Dendritic cell treated with granulocyte-macrophage colony-stimulating factor and Interleukin-4, amounts not matched to agents 40 ng/mL and 50 ng/mL, for 4 days (primary cell): ENCODE measurements at regions of chr3 and their contacts with region 1.

Region 1: GRCh38 chr3:30042274-30042859 is 564.0 kb upstream of the TGFBR2 start:
- H3K4me3 Mint-ChIP-seq: no peak overlapping the region
- H3K27ac Mint-ChIP-seq: no peak overlapping the region
- H3K4me1 Mint-ChIP-seq: peaks cover 31% of the 10 kb centered on the region
- H3K27me3 Mint-ChIP-seq: no peaks in the 10 kb centered on the region

Region 2: DNA sequence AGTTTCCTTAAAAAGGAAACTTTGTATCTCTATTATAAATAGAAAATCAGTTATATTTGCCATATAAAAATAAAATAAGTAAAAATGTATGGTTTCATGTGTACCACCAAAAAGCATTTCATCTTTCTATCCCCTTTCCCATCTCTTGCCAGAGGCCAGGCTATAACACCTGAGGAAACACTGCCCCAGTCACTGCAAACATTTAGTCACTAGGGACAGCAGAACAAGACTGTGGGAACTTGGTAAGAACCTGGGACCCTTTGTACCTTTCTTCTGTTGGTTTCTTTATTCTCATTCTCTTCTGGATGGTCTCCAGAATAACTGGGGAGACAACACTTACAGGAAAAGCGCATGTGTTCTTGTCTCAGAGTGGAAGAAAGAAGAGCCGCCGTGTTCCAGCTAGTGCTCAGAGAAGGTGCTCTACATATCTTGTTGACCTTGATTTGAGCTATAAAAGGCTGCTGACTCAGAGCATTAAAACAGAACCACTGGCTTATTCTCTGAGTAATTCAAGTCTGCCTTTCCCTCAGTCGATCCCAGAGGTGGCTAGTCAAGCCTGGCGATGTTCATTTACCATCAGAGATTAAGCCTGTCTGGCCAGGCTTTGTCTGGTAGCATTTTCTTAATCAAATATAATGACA is 399.9 kb before region 1 on chr3:
- intact Hi-C with region 1: no loop called
- H3K4me3 Mint-ChIP-seq: no peak overlapping the region
- H3K27ac Mint-ChIP-seq: no peak overlapping the region
- H3K4me1 Mint-ChIP-seq: no peaks in the 10 kb centered on the region
- H3K27me3 Mint-ChIP-seq: peaks cover 14% of the 10 kb centered on the region

Region 3: DNA sequence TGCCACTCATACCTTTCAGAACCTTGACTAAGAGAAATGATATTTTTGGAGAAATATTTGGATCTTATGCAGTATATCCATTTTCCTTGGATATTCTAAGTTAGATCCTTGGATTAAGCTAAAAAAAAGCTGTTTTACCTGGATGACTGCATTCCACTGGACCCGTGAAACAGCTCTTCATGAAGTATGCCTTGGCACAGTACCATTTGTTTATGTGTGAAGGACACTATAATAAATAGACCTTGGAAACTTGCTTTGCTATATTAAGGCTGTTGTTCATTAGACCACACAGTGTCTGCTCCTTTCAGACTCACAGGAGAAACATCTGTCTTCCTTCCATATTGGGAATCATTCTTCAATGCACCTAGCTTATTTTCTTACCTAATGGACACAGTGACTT is 87.0 kb before region 1 on chr3:
- intact Hi-C with region 1: no loop called
- H3K4me3 Mint-ChIP-seq: no peak overlapping the region
- H3K27ac Mint-ChIP-seq: no peak overlapping the region
- H3K4me1 Mint-ChIP-seq: no peaks in the 10 kb centered on the region
- H3K27me3 Mint-ChIP-seq: no peaks in the 10 kb centered on the region

Region 4: GRCh38 chr3:30553641-30554316 is 511.4 kb after region 1 on chr3:
- intact Hi-C with region 1: loop called (anchors 10 kb)
- H3K4me3 Mint-ChIP-seq: no peak overlapping the region
- H3K27ac Mint-ChIP-seq: no peak overlapping the region
- H3K4me1 Mint-ChIP-seq: peaks cover 8% of the 10 kb centered on the region
- H3K27me3 Mint-ChIP-seq: no peaks in the 10 kb centered on the region

Region 5: DNA sequence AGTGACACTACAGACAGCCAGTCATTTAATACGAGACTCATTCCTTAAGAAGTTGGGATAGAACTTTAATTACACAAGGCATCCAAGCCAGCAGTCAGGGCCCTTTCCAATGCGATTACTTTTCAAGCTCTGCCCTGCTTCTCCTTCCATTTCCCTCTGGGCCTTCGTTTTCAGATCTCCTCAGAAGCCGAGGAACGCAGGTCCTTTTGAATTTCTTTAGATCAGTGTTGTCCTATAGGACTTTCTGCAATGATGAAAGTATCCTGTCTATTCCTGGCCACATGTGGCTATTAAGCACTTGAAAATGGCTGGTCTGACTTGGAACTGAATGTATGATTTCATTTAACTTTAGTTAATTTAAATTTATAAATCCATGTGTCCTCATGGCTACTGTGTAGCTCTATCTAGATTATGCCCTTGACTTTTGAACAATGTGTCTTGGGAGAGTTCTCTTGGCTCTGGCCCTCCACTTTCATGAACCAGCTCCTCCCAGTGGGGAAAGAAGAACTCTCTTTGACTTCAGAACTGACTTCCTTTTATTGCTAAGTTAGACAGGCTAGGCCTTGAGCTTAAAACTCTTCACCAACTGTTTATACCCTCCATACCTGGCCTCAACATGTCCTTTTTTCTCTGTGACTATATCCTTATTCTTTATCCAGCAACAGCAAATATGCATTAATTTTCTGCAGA is 586.7 kb after region 1 on chr3:
- intact Hi-C with region 1: loop called (anchors 10 kb)
- H3K4me3 Mint-ChIP-seq: peak overlapping the region; percentile 23
- H3K27ac Mint-ChIP-seq: peak overlapping the region; percentile 76
- H3K4me1 Mint-ChIP-seq: peaks cover 68% of the 10 kb centered on the region
- H3K27me3 Mint-ChIP-seq: no peaks in the 10 kb centered on the region